Activated naive CD4-positive, alpha-beta T cell treated with anti-CD3 and anti-CD28 coated beads for 36 hours (primary cell): ENCODE measurements at regions of chr16 and their contacts with region 1.

Region 1: GRCh38 chr16:31179747-31180459 is at the start of gene FUS:
- DNase-seq: peak; percentile 92
- H3K4me3 Mint-ChIP-seq: peak within 1 kb of the TSS; percentile 99
- H3K27ac Mint-ChIP-seq: peak within 1 kb of the TSS; percentile 100
- H3K4me1 Mint-ChIP-seq: peaks cover 51% of the 10 kb centered on the region
- H3K27me3 Mint-ChIP-seq: no peaks in the 10 kb centered on the region
- total RNA-seq, gene FUS: 424 to 435 TPM

Region 2: DNA sequence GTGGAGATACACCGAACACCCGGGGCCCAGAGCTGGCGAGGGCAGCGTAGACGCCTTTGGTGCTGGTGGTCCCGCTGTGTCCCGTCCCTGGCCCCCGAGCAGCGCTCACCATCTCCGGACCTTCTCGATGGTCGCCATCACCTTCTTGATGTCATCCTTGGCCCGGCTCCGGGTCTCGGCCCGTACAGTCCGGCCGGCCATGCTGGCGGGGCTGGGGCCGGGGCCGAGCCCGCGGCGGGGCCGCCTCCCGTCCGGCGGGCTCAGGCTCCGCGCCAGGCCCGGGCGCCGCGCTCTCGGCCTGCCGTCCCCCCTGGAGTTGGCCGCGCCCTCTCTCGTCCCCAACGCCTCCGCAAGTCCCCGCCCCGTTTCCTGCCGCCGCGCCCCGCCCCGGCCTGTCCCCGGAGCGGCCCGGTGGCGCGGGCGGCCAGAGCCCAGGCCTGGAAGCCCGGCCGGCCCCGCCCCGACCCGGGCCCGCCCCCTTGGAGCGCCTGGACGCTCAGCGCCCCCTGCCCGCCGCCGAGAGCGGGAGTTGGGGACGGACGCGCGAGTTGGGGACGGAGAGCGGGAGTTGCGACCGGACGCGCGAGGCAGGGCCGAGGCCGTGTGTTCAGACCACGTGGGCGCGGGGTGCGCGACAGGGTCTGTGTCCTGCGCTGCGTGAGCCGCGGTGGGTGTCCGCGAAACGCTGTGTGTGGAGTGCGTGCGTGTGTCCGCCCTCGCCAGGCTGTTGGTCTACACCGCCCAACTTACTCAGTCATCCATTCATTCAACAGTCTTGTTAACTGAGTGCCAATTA is 286.0 kb before region 1 on chr16 and contains the start of gene BCL7C:
- CTCF ChIA-PET with region 1: no interaction called
- intact Hi-C with region 1: no loop called
- DNase-seq: peak; percentile 90
- H3K4me3 Mint-ChIP-seq: peak within 1 kb of the TSS; percentile 84
- H3K27ac Mint-ChIP-seq: peak within 1 kb of the TSS; percentile 78
- H3K4me1 Mint-ChIP-seq: peaks cover 39% of the 10 kb centered on the region
- H3K27me3 Mint-ChIP-seq: no peaks in the 10 kb centered on the region
- total RNA-seq, gene BCL7C: 18.1 to 18.6 TPM

Region 3: GRCh38 chr16:30957456-30958174 is 222.3 kb before region 1 on chr16 and contains the start of gene SETD1A:
- CTCF ChIA-PET with region 1: interaction called, 3 read pairs
- intact Hi-C with region 1: loop called (anchors 1 kb)
- DNase-seq: peak; percentile 99
- H3K4me3 Mint-ChIP-seq: peak within 1 kb of the TSS; percentile 93
- H3K27ac Mint-ChIP-seq: peak within 1 kb of the TSS; percentile 99
- H3K4me1 Mint-ChIP-seq: peaks cover 27% of the 10 kb centered on the region
- H3K27me3 Mint-ChIP-seq: no peaks in the 10 kb centered on the region
- total RNA-seq, gene SETD1A: 14.3 to 14.6 TPM

Region 4: GRCh38 chr16:31094424-31095120 is 85.3 kb before region 1 on chr16 and contains the start of gene VKORC1:
- CTCF ChIA-PET with region 1: no interaction called
- intact Hi-C with region 1: loop called (anchors 1 kb)
- DNase-seq: peak; percentile 95
- H3K4me3 Mint-ChIP-seq: peak within 1 kb of the TSS; percentile 89
- H3K27ac Mint-ChIP-seq: peak within 1 kb of the TSS; percentile 83
- H3K4me1 Mint-ChIP-seq: peaks cover 31% of the 10 kb centered on the region
- H3K27me3 Mint-ChIP-seq: no peaks in the 10 kb centered on the region
- total RNA-seq, gene VKORC1: 43.4 to 47.8 TPM

Region 5: GRCh38 chr16:31202414-31203375 is 22.8 kb after region 1 on chr16 and contains the start of gene PYCARD:
- CTCF ChIA-PET with region 1: interaction called, 4 read pairs
- intact Hi-C with region 1: loop called (anchors 2 kb)
- DNase-seq: peak; percentile 31
- H3K4me3 Mint-ChIP-seq: peak within 1 kb of the TSS; percentile 71
- H3K27ac Mint-ChIP-seq: no peak within 1 kb of the TSS
- H3K4me1 Mint-ChIP-seq: peaks cover 46% of the 10 kb centered on the region
- H3K27me3 Mint-ChIP-seq: no peaks in the 10 kb centered on the region
- total RNA-seq, gene PYCARD: 2.4 to 2.5 TPM

Region 6: DNA sequence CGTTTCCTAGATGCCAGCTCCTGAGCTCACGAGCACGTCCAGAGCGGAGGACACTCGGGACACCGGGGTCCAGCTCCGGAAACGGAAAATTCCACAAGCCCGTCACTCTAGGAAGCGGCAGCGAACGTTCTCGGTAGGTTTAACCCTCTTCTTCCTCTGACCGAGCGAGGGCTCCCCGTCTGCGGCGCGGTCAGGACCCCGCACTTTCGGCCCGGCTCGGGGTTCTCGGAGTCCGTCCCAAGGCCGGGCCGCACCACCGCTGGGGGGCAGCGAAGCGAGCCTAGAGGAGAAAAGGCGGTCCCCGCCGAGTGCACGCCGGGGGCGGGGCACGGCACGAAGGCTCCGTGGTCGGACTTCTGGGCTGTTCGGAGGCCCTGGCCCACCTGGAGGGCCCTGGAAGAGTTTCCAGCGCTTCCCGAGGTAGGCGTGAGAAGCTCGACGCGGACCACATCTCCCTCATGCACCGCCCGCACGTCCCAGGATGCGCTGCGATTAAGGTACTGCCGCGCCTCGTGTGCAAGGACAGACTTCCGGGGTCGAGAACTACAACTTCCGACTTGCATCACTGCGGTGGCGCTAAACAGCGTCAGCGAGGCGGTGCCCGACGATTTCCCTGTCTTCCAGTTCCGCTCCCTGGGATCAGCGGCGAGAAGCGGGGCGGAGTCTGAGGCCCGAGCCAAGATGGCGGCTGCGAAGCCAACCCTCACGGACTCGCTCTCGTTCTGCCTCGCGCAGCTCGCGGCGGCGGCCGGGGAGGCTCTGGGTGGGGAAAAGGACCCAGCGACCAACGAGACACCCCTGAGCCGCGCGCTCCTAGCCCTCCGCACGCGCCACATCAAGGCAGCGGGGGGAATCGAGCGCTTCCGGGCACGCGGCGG is 279.2 kb after region 1 on chr16 and contains the start of gene ARMC5:
- CTCF ChIA-PET with region 1: interaction called, 3 read pairs
- intact Hi-C with region 1: loop called (anchors 1 kb)
- DNase-seq: peak; percentile 99
- H3K4me3 Mint-ChIP-seq: peak within 1 kb of the TSS; percentile 87
- H3K27ac Mint-ChIP-seq: peak within 1 kb of the TSS; percentile 94
- H3K4me1 Mint-ChIP-seq: peaks cover 41% of the 10 kb centered on the region
- H3K27me3 Mint-ChIP-seq: no peaks in the 10 kb centered on the region
- total RNA-seq, gene ARMC5: 6.3 to 6.7 TPM

Region 7: DNA sequence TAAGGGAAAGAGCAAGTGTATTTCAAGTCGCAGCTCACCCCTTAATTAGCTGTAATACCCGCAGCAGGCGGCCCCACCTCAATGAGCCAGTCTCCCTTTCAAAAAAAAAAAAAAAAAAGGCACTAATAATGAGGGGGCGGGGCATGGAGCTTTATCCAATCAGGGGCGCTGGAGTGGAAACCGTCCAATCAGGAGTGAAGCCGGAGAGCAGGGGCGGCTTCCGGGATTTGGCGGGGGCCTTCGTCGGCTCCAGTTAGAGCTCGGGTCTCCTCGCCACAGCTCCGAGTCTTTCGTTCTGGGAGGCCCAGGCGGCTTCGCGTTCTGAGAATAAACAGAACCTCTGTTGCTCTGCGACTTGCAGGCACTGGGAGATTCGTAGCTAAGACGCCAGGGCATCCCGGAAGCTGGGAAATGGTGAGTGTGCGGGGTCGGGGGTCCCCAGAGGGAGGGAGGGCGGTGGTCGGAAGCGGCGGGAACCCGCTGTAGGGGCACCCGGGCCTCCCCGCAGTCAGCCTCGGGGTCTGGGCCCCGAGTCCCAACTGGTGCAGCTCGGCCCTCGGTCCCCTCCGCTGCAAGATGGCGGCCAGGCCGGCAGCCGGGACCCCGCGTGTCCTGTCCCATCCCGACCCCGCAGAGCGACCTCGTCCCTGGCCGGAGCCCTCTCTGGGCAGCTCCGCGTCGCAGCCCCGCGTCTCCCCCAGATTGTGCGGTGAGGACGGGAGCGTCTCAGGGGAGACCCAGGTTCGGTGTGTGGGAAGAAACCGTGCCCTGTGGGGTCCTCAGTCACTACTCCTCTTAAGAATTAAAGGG is 693.9 kb after region 1 on chr16 and contains the start of gene ZNF267:
- CTCF ChIA-PET with region 1: no interaction called
- intact Hi-C with region 1: loop called (anchors 2 kb)
- DNase-seq: peak; percentile 97
- H3K4me3 Mint-ChIP-seq: peak within 1 kb of the TSS; percentile 88
- H3K27ac Mint-ChIP-seq: peak within 1 kb of the TSS; percentile 96
- H3K4me1 Mint-ChIP-seq: peaks cover 79% of the 10 kb centered on the region
- H3K27me3 Mint-ChIP-seq: no peaks in the 10 kb centered on the region
- total RNA-seq, gene ZNF267: 58.7 to 59.7 TPM